Activated T-helper 2 cell treated with anti-CD3 and anti-CD28 coated beads, Interferon-gamma antibody, Interleukin-2, Interleukin-4, amounts not matched to agents 10 μg/mL and 5 μg/mL and 100 μg/mL, durations not matched to agents 14 hours and 24 hours and 36 hours (primary cell): ENCODE measurements at regions of chr1 and their contacts with region 1.

Region 1: DNA sequence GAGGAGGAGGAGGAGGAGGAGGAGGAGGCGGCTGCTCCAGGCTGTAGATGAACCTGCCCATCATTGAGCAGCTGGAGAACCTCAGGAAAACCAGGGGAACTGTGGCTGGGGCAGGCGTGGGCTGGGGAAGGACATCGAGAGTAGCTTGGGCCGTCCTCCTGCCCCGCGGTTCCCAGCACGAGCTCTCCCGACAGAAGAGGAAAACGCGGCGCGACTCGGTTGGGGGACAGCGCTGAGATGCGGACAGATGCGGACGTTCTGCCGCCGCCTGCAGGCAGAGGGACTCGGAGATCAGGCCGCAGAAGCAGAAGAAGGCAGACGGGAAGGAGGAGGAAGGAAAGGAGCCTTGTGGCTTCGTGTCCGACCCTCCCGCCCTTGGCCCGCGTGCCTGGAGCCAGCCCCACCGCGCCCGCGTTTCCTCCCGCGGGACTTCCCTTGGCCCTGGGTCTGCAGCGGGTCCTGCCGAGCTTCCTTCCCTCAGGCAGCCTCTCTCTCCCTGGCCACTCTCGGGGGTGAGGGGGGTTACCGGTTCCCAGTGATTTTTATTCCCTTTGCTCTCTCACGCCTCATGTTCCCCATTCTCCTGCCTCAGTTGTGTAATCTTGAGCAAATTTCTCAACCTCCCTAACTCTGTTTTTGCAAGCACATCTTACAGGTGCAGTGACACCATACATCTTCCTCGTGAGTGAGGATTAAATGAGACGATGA is 1.7 kb upstream of the TNFRSF9 start:
- DNase-seq: no peak
- H3K4me3 Mint-ChIP-seq: peak overlapping the region; percentile 77
- H3K27ac Mint-ChIP-seq: peak overlapping the region; percentile 91
- H3K4me1 Mint-ChIP-seq: peaks cover 57% of the 10 kb centered on the region
- H3K27me3 Mint-ChIP-seq: no peaks in the 10 kb centered on the region

Region 2: DNA sequence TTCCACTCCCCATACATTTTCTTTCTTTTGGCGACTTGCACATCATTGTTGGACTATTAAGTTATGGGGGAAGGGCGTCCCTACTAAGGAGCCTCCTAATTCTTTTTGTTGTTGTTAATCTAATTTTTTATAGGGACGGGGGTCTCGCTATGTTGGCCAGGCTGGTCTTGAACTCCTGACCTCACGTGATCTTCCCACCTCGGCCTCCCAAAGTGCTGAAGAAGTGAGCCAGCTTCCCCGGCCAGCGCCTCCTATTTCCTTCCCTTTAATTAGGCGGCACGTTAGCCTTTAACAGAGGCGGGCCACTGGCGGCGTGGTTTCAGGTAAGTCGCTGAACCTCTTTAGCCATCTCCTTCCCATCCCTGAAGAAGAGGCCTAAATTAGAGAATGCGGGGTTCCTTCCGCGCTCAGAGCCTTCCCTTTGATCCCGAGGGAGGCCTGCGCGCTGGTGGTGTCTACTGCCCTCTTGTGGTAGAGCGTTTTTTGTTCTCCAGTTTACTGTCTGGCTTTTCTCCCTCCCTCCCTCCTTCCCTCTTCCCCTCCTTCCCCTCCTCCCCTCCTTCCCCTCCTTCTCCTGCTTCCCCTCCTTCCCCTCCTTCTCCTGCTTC is 39.8 kb before region 1 on chr1:
- intact Hi-C with region 1: loop called (anchors 5 kb)
- DNase-seq: peak; percentile 32
- H3K4me3 Mint-ChIP-seq: peak overlapping the region; percentile 52
- H3K27ac Mint-ChIP-seq: no peak overlapping the region
- H3K4me1 Mint-ChIP-seq: peaks cover 12% of the 10 kb centered on the region
- H3K27me3 Mint-ChIP-seq: peaks cover 2% of the 10 kb centered on the region

Region 3: DNA sequence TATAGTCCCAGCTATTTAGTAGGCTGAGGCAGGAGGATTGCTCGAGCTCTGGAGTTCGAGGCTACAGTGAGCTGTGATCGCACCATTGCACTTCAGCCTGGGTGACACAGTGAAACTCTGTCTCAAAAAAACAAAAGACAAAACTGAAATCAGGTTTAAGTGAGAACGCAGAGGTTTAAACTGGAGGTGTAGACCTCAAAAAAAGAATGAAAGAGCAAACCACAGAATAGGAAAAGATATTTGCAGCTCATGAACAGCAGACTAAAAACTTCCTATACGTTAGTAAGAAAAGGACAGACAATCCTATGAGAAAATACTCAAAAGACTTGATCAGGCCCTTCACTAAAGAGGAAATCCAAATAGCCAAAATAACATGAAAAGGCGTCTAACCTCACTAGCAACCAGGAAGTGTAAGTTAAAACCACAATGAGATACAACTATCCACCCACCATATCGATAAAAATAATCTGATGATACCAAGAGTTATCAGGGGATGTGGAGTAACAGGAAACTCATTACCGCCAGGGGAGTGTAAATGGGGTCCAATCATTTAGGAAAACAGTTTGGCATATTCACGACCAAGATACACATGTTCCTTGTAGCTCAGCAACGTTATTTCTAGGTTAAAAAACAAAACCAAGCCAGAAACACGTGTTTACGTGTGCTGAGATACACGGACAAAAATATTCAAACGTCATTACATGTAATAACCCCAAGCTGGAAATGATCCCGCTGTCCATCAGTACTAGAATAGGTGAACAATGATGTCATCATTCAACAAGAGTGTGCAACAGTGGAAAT is 11.5 kb before region 1 on chr1:
- intact Hi-C with region 1: loop called (anchors 1 kb)
- DNase-seq: no peak
- H3K4me3 Mint-ChIP-seq: peak overlapping the region; percentile 14
- H3K27ac Mint-ChIP-seq: peak overlapping the region; percentile 81
- H3K4me1 Mint-ChIP-seq: peaks cover 53% of the 10 kb centered on the region
- H3K27me3 Mint-ChIP-seq: no peaks in the 10 kb centered on the region

Region 4: GRCh38 chr1:7953850-7954609 is 11.7 kb after region 1 on chr1:
- intact Hi-C with region 1: loop called (anchors 1 kb)
- DNase-seq: peak; percentile 80
- H3K4me3 Mint-ChIP-seq: peak overlapping the region; percentile 85
- H3K27ac Mint-ChIP-seq: peak overlapping the region; percentile 97
- H3K4me1 Mint-ChIP-seq: peaks cover 48% of the 10 kb centered on the region
- H3K27me3 Mint-ChIP-seq: no peaks in the 10 kb centered on the region

Region 5: GRCh38 chr1:7993593-7994479 is 51.5 kb after region 1 on chr1:
- intact Hi-C with region 1: no loop called
- DNase-seq: no peak
- H3K4me3 Mint-ChIP-seq: no peak overlapping the region
- H3K27ac Mint-ChIP-seq: peak overlapping the region; percentile 1
- H3K4me1 Mint-ChIP-seq: peaks cover 6% of the 10 kb centered on the region
- H3K27me3 Mint-ChIP-seq: no peaks in the 10 kb centered on the region

Region 6: GRCh38 chr1:8373581-8374241 is 431.3 kb after region 1 on chr1:
- intact Hi-C with region 1: no loop called
- DNase-seq: no peak
- H3K4me3 Mint-ChIP-seq: no peak overlapping the region
- H3K27ac Mint-ChIP-seq: no peak overlapping the region
- H3K4me1 Mint-ChIP-seq: peaks cover 21% of the 10 kb centered on the region
- H3K27me3 Mint-ChIP-seq: no peaks in the 10 kb centered on the region